HepG2 (cell line): ENCODE measurements at regions of chr2 and their contacts with region 1.

Region 1: GRCh38 chr2:207746131-207746530 is 23.6 kb downstream of the FZD5 start:
- DNase-seq: peak; percentile 85
- ATAC-seq: peak; percentile 79
- H3K4me3 ChIP-seq: no peak overlapping the region
- H3K27ac ChIP-seq: peak overlapping the region; percentile 2
- H3K4me1 ChIP-seq: peaks cover 64% of the 10 kb centered on the region
- H3K27me3 ChIP-seq: no peaks in the 10 kb centered on the region
- CTCF ChIP-seq: peak; percentile 97
- EP300 ChIP-seq: peak in 1 of 2 experiments; percentile 36; a peak in 1 of 4 replicates
- POLR2A ChIP-seq: no peak
- RAD21 ChIP-seq: peak; percentile 99

Region 2: GRCh38 chr2:207571370-207571769 is 174.8 kb before region 1 on chr2:
- CTCF ChIA-PET with region 1: no interaction called
- POLR2A ChIA-PET with region 1: no interaction called
- in situ Hi-C with region 1: no loop called
- intact Hi-C with region 1: no loop called
- DNase-seq: no peak
- ATAC-seq: no peak
- H3K4me3 ChIP-seq: no peak overlapping the region
- H3K27ac ChIP-seq: no peak overlapping the region
- H3K4me1 ChIP-seq: no peaks in the 10 kb centered on the region
- H3K27me3 ChIP-seq: no peaks in the 10 kb centered on the region
- CTCF ChIP-seq: no peak
- EP300 ChIP-seq: no peak
- POLR2A ChIP-seq: no peak
- RAD21 ChIP-seq: no peak

Region 3: GRCh38 chr2:207710814-207711740 is 35.1 kb before region 1 on chr2 and contains the start of gene CCNYL1:
- CTCF ChIA-PET with region 1: no interaction called
- POLR2A ChIA-PET with region 1: interaction called, 23 read pairs
- in situ Hi-C with region 1: no loop called
- intact Hi-C with region 1: no loop called
- DNase-seq: peak; percentile 99
- ATAC-seq: peak; percentile 96
- H3K4me3 ChIP-seq: peak within 1 kb of the TSS; percentile 86 to 97 (median 91)
- H3K27ac ChIP-seq: peak within 1 kb of the TSS; percentile 96
- H3K4me1 ChIP-seq: peaks cover 40% of the 10 kb centered on the region
- H3K27me3 ChIP-seq: no peaks in the 10 kb centered on the region; a peak in 1 of 5 replicates
- CTCF ChIP-seq: peak; percentile 34
- EP300 ChIP-seq: no peak
- POLR2A ChIP-seq: peak; percentile 94
- RAD21 ChIP-seq: 0 out of 2 replicates have a peak, but pooled peaks have one; percentile 20
- total RNA-seq, gene CCNYL1: 12.5 and 20.2 TPM in 2 replicates

Region 4: GRCh38 chr2:207813221-207813916 is 67.2 kb after region 1 on chr2:
- CTCF ChIA-PET with region 1: no interaction called
- POLR2A ChIA-PET with region 1: interaction called, 11 read pairs
- in situ Hi-C with region 1: no loop called
- intact Hi-C with region 1: no loop called
- DNase-seq: no peak
- ATAC-seq: 0 out of 3 replicates have a peak, but pooled peaks have one; percentile 6
- H3K4me3 ChIP-seq: no peak overlapping the region
- H3K27ac ChIP-seq: no peak overlapping the region
- H3K4me1 ChIP-seq: peaks cover 88% of the 10 kb centered on the region
- H3K27me3 ChIP-seq: no peaks in the 10 kb centered on the region
- CTCF ChIP-seq: no peak; the same call in 1 of the 2 replicates
- EP300 ChIP-seq: no peak
- POLR2A ChIP-seq: no peak
- RAD21 ChIP-seq: 0 out of 2 replicates have a peak, but pooled peaks have one; percentile 12

Region 5: DNA sequence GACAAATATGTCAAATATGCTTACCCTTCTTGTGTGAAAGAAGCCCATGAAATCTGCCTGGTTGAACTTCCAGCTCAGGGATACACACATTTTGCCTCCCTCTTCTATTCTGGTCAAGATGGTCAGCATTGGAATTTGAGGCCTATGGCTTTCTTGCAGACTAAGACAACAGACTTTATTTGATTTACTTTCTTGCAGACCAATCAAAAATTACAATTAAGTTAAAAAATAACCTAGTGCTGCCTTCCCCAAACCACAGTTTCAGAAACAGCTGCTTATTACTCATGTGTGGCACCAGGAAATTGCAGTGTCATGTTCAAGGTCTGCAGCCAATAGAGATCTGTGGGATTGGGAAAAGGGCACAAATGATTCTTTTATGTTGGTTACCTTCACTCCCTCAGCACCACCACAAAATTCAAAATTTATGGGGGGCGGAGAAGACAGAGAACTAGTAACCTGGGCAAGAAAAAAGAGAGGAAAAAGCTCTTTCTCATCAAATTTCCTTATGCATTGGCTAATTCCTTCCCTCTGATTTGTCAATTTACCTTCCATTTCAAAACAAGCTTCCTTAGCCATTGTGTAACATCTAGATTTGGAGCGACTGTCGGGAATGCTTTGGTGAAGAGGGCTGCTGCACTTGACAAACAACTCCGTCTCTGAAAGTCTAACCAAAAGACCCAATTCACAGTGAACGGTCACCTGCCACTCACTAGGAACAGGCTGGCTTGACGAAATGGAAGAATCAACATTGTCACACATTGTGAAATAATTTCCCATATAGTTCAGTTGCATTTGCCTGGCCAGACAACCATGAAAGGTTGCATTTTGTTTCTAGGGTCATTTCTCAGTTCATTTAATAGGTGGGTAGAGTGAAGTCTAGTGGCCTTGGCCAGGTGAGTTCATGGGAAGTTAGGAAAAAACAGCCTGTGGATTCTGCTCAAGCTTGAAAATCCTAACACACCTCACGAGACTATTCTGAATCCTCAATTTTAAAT is 124.0 kb after region 1 on chr2:
- CTCF ChIA-PET with region 1: no interaction called
- POLR2A ChIA-PET with region 1: interaction called, 14 read pairs
- in situ Hi-C with region 1: no loop called
- intact Hi-C with region 1: no loop called
- DNase-seq: peak; percentile 100
- ATAC-seq: peak; percentile 95
- H3K4me3 ChIP-seq: peak overlapping the region; percentile 3 to 10 (median 3); a peak in 4 of 6 replicates
- H3K27ac ChIP-seq: peak overlapping the region; percentile 81
- H3K4me1 ChIP-seq: peaks cover 57% of the 10 kb centered on the region
- H3K27me3 ChIP-seq: no peaks in the 10 kb centered on the region
- CTCF ChIP-seq: no peak
- EP300 ChIP-seq: peak; percentile 97 to 99
- POLR2A ChIP-seq: peak in 1 of 2 experiments; percentile 57; a peak in 2 of 4 replicates
- RAD21 ChIP-seq: peak; percentile 36; the same call in 1 of the 2 replicates

Region 6: DNA sequence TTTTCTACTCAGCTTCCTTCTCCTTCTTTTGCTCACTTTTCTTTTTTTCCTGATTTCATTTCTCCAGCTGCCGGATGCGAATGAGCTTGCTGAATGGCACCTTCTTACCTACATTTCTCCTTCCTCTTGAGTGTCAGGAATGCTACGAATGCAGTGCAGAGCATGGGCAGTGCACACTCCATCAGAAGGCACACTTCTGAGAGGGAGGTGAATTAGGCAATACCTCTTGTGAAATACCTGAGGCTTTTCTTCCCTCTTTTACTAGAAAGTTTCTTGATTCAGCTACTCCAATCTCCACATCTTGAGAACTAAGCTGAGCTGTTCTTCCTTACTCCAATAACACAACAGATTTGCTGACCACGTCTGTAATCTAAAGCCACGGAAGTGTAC is 228.1 kb after region 1 on chr2:
- CTCF ChIA-PET with region 1: interaction called, 15 read pairs
- POLR2A ChIA-PET with region 1: interaction called, 4 read pairs
- in situ Hi-C with region 1: no loop called
- intact Hi-C with region 1: loop called (anchors 1 kb)
- DNase-seq: no peak
- ATAC-seq: no peak
- H3K4me3 ChIP-seq: no peak overlapping the region
- H3K27ac ChIP-seq: no peak overlapping the region
- H3K4me1 ChIP-seq: peaks cover 28% of the 10 kb centered on the region
- H3K27me3 ChIP-seq: no peaks in the 10 kb centered on the region
- CTCF ChIP-seq: no peak
- EP300 ChIP-seq: no peak
- POLR2A ChIP-seq: no peak
- RAD21 ChIP-seq: no peak

Region 7: DNA sequence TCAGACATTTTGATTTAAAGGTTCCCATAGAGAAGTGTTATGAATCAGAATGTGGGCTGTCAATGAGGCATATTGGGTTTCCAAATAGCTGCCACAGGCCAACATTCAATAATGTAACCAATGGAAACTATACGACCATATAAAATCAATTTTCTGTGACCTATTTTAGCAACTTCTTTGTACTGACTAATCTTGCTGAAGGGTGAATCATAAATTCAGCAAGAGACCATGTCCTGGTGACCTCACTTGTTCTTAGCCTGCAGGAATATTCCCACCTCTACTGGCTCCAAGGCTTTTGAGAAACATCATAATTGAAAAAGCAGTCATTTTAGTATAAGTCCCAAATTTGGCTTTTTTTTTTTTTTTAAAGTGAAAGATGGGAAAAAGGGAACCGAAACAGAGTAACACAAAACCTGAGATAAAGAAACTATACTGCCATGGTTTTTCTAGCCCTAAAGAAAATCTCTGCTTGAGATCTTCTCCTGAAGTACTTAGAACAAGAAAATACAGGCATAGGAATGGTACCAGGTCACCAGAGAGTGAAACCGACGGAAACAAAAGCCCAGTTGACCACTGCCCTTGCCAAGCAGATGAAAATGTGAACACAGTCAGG is 247.1 kb after region 1 on chr2:
- CTCF ChIA-PET with region 1: no interaction called
- POLR2A ChIA-PET with region 1: no interaction called
- in situ Hi-C with region 1: no loop called
- intact Hi-C with region 1: no loop called
- DNase-seq: no peak
- ATAC-seq: no peak
- H3K4me3 ChIP-seq: no peak overlapping the region
- H3K27ac ChIP-seq: no peak overlapping the region
- H3K4me1 ChIP-seq: no peaks in the 10 kb centered on the region
- H3K27me3 ChIP-seq: no peaks in the 10 kb centered on the region
- CTCF ChIP-seq: no peak
- EP300 ChIP-seq: no peak
- POLR2A ChIP-seq: no peak
- RAD21 ChIP-seq: no peak

Region 8: GRCh38 chr2:208062113-208062512 is 316.0 kb after region 1 on chr2:
- CTCF ChIA-PET with region 1: interaction called, 17 read pairs
- POLR2A ChIA-PET with region 1: no interaction called
- in situ Hi-C with region 1: loop called (anchors 5 kb)
- intact Hi-C with region 1: no loop called
- DNase-seq: peak; percentile 71
- ATAC-seq: peak; percentile 87
- H3K4me3 ChIP-seq: no peak overlapping the region
- H3K27ac ChIP-seq: no peak overlapping the region
- H3K4me1 ChIP-seq: 0 out of 2 replicates have a peak, but pooled peaks cover 4% of the 10 kb centered on the region
- H3K27me3 ChIP-seq: 0 out of 5 replicates have a peak, but pooled peaks cover 0 to 6% of the 10 kb centered on the region in 2 experiments
- CTCF ChIP-seq: peak; percentile 69
- EP300 ChIP-seq: no peak
- POLR2A ChIP-seq: no peak
- RAD21 ChIP-seq: no peak; the same call in 1 of the 2 replicates